Activated naive CD4-positive, alpha-beta T cell treated with anti-CD3 and anti-CD28 coated beads for 36 hours (primary cell): ENCODE measurements at regions of chr5 and their contacts with region 1.

Region 1: GRCh38 chr5:37043688-37044087 is 167.1 kb downstream of the NIPBL start:
- DNase-seq: no peak
- H3K4me3 Mint-ChIP-seq: no peak overlapping the region
- H3K27ac Mint-ChIP-seq: no peak overlapping the region
- H3K4me1 Mint-ChIP-seq: no peaks in the 10 kb centered on the region
- H3K27me3 Mint-ChIP-seq: no peaks in the 10 kb centered on the region

Region 2: GRCh38 chr5:37326536-37326935 is 282.8 kb after region 1 on chr5:
- CTCF ChIA-PET with region 1: no interaction called
- intact Hi-C with region 1: loop called (anchors 10 kb)
- DNase-seq: no peak
- H3K4me3 Mint-ChIP-seq: no peak overlapping the region
- H3K27ac Mint-ChIP-seq: no peak overlapping the region
- H3K4me1 Mint-ChIP-seq: no peaks in the 10 kb centered on the region
- H3K27me3 Mint-ChIP-seq: no peaks in the 10 kb centered on the region